Caco-2 (cell line): ENCODE measurements at regions of chr4 and their contacts with region 1.

Region 1: DNA sequence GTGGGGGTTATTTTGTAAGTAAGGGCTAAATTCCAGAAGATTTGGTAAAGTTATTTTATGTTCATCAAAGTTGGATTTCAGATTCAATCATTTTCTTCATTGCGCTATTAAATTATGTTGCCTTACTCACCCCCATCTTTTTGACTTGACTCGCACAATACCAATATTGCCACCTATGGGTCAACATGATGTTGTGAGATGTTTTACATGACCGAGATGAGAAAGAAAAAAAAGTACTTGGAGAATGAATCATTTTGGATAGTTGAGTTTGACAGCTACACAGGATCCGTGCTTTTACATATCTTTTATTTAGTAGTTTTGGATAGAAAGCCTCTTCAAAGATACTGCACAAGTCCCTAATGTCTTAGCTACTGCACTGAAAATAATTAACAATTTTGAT is 224.2 kb upstream of the EMCN start:
- DNase-seq: peak in 1 of 2 experiments; percentile 19
- H3K4me3 ChIP-seq: no peak overlapping the region
- H3K4me3 Mint-ChIP-seq: no peak overlapping the region
- H3K27ac Mint-ChIP-seq: no peak overlapping the region
- H3K4me1 ChIP-seq: no peaks in the 10 kb centered on the region
- H3K4me1 Mint-ChIP-seq: no peaks in the 10 kb centered on the region
- H3K27me3 ChIP-seq: no peaks in the 10 kb centered on the region
- H3K27me3 Mint-ChIP-seq: no peaks in the 10 kb centered on the region
- CTCF ChIP-seq: peak in 1 of 2 experiments; percentile 30

Region 2: DNA sequence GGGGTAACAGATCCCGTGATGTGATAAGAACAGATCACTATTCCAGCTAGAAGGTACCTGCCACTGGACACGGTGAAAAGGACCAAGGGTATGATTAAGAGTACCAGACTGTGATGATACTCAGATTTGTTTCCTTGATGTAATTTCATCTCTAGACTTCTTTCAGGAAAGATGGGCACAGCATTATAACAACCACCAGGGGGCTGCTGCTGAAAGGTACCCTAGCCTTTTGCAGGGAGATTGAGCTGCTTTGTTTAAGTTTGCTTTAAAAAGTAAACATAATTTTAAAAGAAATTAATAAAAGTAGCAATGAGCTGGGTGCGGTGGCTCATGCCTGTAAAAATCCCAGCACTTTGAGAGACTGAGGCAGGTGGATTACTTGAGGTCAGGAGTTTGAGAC is 369.6 kb before region 1 on chr4:
- CTCF ChIA-PET with region 1: no interaction called
- POLR2A ChIA-PET with region 1: no interaction called
- intact Hi-C with region 1: loop called (anchors 2 kb)
- DNase-seq: peak in 1 of 2 experiments; percentile 1
- H3K4me3 ChIP-seq: no peak overlapping the region
- H3K4me3 Mint-ChIP-seq: no peak overlapping the region
- H3K27ac Mint-ChIP-seq: no peak overlapping the region
- H3K4me1 ChIP-seq: no peaks in the 10 kb centered on the region
- H3K4me1 Mint-ChIP-seq: no peaks in the 10 kb centered on the region
- H3K27me3 ChIP-seq: no peaks in the 10 kb centered on the region
- H3K27me3 Mint-ChIP-seq: peaks cover 3% of the 10 kb centered on the region
- CTCF ChIP-seq: peak; percentile 29 to 57

Region 3: DNA sequence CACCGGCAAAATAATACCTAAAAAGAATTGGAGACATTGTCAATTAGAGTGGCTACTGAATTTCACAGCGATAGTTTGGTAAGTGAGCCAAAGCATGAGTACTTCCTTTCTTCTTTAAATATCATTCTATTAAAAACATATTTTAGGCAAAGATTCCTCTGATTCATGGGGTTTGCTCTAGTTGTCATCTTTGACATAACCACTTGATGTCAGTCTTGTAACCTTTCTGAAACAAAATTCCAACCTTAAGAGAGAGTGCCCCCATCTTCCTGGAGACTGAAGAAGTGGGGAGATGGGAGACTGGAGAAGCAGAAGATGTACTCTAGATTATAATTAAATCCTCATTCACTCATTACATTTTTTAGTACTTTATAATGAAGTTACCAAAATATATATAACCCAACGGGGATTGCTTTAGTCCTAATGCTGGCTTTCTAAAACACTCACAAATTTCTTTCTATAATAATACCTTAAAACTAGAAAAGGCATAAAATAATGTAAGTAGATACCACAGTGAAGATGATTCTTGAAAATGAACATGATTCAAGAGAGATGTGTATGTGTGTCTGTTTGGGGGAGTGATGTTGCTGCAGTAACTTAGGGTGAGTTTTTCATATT is 320.6 kb before region 1 on chr4:
- CTCF ChIA-PET with region 1: no interaction called
- POLR2A ChIA-PET with region 1: no interaction called
- intact Hi-C with region 1: loop called (anchors 1 kb)
- DNase-seq: no peak
- H3K4me3 ChIP-seq: no peak overlapping the region
- H3K4me3 Mint-ChIP-seq: no peak overlapping the region
- H3K27ac Mint-ChIP-seq: no peak overlapping the region
- H3K4me1 ChIP-seq: no peaks in the 10 kb centered on the region
- H3K4me1 Mint-ChIP-seq: no peaks in the 10 kb centered on the region
- H3K27me3 ChIP-seq: no peaks in the 10 kb centered on the region
- H3K27me3 Mint-ChIP-seq: peaks cover 2% of the 10 kb centered on the region
- CTCF ChIP-seq: peak; percentile 29 to 49

Region 4: GRCh38 chr4:100504086-100504874 is 237.8 kb before region 1 on chr4:
- CTCF ChIA-PET with region 1: no interaction called
- POLR2A ChIA-PET with region 1: no interaction called
- intact Hi-C with region 1: loop called (anchors 2 kb)
- DNase-seq: peak in 1 of 2 experiments; percentile 27
- H3K4me3 ChIP-seq: no peak overlapping the region
- H3K4me3 Mint-ChIP-seq: no peak overlapping the region
- H3K27ac Mint-ChIP-seq: no peak overlapping the region
- H3K4me1 ChIP-seq: no peaks in the 10 kb centered on the region
- H3K4me1 Mint-ChIP-seq: no peaks in the 10 kb centered on the region
- H3K27me3 ChIP-seq: no peaks in the 10 kb centered on the region
- H3K27me3 Mint-ChIP-seq: no peaks in the 10 kb centered on the region
- CTCF ChIP-seq: peak in 1 of 2 experiments; percentile 16

Region 5: DNA sequence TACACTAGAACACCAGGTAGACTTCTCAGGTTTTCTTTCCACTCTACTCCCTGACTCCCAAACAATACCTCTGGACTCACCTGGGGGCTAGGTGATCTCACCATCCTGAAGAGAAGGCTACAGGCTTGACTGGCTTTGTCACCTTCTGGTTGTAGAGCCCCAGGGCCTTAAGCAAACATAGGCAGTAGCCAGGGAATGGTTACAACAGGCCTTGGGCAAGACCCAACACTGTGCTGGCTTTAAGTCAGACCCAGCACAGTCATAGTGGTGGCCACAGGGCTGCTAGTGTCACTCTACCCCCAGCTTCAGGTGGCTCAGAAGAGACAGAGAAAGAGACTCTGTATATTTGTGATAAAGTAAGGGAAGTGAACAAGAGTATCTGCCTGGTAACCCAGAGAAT is 106.1 kb before region 1 on chr4:
- CTCF ChIA-PET with region 1: no interaction called
- POLR2A ChIA-PET with region 1: no interaction called
- intact Hi-C with region 1: loop called (anchors 10 kb)
- DNase-seq: no peak
- H3K4me3 ChIP-seq: no peak overlapping the region
- H3K4me3 Mint-ChIP-seq: no peak overlapping the region
- H3K27ac Mint-ChIP-seq: no peak overlapping the region
- H3K4me1 ChIP-seq: no peaks in the 10 kb centered on the region
- H3K4me1 Mint-ChIP-seq: no peaks in the 10 kb centered on the region
- H3K27me3 ChIP-seq: no peaks in the 10 kb centered on the region
- H3K27me3 Mint-ChIP-seq: peaks cover 8% of the 10 kb centered on the region
- CTCF ChIP-seq: no peak